Tibial artery (tissue), 4 donors: ENCODE measurements at regions of chr6 and their contacts with region 1.

Region 1: DNA sequence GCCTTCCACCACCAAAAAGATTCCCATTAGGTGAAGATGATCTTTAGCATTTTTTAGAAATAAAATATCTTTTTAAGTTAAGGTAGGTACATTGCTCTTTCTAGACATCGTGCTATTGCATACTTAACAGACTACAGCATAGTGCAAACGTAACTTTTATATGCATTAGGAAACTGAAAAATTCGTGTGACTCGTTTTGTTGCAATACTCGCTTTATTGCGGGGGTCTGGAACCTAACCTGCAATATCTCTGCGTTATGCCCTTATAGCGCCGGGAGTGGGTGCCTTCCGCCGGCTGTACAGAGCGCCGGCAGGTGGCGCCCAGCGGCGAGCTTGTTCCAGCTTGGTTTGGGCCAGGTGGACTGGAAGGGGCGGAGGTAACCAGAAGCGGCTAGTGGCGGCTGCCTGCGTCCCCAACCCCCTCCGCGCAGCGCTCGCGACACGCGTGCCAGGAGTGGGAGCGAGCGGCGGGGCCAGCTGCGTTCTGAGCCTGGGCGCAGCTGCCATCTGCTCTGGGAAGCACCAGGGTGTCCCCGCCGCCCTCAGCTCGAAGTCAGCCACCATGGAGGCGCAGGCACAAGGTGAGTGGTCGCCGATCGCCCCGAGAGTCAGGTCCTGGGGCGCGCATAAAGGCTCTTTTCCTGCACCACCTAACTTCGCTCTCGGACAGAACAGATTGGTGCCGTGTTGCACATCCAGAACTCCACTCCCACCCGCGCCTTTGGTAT is at the start of gene TPD52L1:
- DNase-seq: peak; percentile 73 to 92
- H3K4me3 ChIP-seq: peak within 1 kb of the TSS; percentile 61 to 68
- H3K27ac ChIP-seq: peak within 1 kb of the TSS; percentile 79 to 85
- H3K4me1 ChIP-seq: peaks cover 0 to 50% (median 9%) of the 10 kb centered on the region in 4 donors
- H3K27me3 ChIP-seq: no peaks in the 10 kb centered on the region
- CTCF ChIP-seq: peak; percentile 84 to 90

Region 2: GRCh38 chr6:125301435-125302391 is 148.2 kb after region 1 on chr6 and contains the start of gene HDDC2:
- intact Hi-C with region 1: loop called (anchors 5 kb)
- DNase-seq: peak; percentile 59 to 83
- H3K4me3 ChIP-seq: peak within 1 kb of the TSS; percentile 76 to 78
- H3K27ac ChIP-seq: peak within 1 kb of the TSS; percentile 88 to 96
- H3K4me1 ChIP-seq: peaks cover 0 to 27% (median 15%) of the 10 kb centered on the region in 4 donors
- H3K27me3 ChIP-seq: no peaks in the 10 kb centered on the region
- CTCF ChIP-seq: no peak

Region 3: GRCh38 chr6:125779924-125780539 is 626.5 kb after region 1 on chr6:
- intact Hi-C with region 1: loop called (anchors 10 kb)
- DNase-seq: peak; percentile 84 to 91
- H3K4me3 ChIP-seq: peak overlapping the region; percentile 64 to 66
- H3K27ac ChIP-seq: peak overlapping the region; percentile 94 to 95
- H3K4me1 ChIP-seq: peaks cover 0 to 6% (median 0%) of the 10 kb centered on the region in 4 donors
- H3K27me3 ChIP-seq: no peaks in the 10 kb centered on the region
- CTCF ChIP-seq: peak; percentile 34 to 54